Common myeloid progenitor, CD34-positive (primary cell): ENCODE measurements at regions of chr1 and their contacts with region 1.

Region 1: DNA sequence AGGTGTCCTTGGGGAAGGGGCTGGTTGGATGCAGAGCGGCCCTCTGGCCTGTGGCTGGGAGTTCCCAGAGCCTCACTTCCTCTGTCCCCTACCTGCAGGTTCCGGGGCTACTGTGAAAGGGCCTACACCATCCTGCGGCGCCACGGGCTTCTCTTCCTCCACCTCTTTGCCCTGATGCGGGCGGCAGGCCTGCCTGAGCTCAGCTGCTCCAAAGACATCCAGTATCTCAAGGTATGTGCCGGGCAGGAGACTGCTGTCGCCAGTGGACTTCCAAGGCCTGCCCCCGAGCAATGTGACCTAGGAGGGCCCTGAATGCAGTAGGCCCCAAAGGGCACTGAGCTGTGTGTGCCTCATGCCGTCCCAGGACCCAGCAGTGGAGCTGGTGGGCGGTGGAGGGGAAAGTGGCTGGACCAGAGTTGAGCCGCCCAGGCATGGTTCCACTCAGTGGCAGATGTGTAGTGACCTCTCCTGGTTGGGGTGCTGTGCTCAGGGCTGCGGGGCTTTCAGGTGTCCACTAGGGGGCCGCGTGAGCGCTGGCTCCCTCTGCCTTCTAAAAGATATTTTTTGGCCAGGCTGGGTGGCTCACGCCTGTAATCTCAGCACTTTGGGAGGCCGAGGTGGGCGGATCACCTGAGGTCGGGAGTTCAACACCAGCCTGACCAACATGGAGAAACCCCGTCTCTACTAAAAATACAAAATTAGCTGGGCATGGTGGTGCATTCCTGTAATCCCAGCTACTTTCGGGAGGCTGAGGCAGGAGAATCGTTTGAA is 73.4 kb downstream of the PIK3CD start:
- DNase-seq: peak; percentile 52 to 72 (median 68)
- H3K4me3 ChIP-seq: no peak overlapping the region
- H3K27ac ChIP-seq: no peak overlapping the region
- H3K4me1 ChIP-seq: no peaks in the 10 kb centered on the region
- H3K27me3 ChIP-seq: no peaks in the 10 kb centered on the region

Region 2: DNA sequence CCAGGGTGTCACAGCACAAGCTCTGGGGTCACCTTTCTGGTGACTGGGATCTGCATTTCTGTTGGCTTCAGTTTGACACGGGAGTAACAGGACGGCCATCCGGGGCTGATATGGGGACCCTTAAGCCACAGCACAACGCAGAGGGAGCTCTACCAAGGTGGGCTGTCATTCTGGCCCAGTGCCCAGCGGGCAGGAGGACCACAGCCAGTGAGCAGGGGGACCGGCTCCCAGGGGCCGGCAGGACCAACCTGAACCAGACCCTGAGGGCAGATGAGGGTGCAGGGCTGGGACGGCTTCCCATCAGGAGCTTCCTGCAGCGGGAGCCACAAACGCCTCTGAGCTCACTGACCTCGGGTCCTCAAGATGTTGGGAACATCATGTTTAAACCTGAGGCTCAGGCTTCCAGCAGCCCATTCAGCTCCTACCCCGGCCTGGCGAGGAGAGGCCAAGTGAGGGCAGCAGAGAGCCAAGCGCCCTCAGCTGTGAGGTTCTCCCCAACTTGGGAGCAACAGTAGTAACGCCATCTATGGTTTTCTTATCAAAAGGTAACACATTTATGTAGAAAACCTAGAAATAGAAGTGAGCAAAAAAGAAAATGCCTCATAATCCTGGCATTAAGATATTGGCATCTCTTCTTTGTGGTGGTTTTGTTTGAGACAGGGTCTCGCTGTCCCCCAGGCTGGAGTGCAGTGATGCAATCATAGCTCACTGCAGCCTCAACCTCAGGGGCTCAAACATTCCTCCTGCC is 109.4 kb before region 1 on chr1:
- CTCF ChIA-PET with region 1: interaction called, 10 read pairs
- POLR2A ChIA-PET with region 1: no interaction called
- DNase-seq: peak; percentile 70 to 85 (median 83)
- H3K4me3 ChIP-seq: no peak overlapping the region
- H3K27ac ChIP-seq: no peak overlapping the region
- H3K4me1 ChIP-seq: peaks cover 0 to 6% (median 3%) of the 10 kb centered on the region in 4 experiments
- H3K27me3 ChIP-seq: no peaks in the 10 kb centered on the region

Region 3: DNA sequence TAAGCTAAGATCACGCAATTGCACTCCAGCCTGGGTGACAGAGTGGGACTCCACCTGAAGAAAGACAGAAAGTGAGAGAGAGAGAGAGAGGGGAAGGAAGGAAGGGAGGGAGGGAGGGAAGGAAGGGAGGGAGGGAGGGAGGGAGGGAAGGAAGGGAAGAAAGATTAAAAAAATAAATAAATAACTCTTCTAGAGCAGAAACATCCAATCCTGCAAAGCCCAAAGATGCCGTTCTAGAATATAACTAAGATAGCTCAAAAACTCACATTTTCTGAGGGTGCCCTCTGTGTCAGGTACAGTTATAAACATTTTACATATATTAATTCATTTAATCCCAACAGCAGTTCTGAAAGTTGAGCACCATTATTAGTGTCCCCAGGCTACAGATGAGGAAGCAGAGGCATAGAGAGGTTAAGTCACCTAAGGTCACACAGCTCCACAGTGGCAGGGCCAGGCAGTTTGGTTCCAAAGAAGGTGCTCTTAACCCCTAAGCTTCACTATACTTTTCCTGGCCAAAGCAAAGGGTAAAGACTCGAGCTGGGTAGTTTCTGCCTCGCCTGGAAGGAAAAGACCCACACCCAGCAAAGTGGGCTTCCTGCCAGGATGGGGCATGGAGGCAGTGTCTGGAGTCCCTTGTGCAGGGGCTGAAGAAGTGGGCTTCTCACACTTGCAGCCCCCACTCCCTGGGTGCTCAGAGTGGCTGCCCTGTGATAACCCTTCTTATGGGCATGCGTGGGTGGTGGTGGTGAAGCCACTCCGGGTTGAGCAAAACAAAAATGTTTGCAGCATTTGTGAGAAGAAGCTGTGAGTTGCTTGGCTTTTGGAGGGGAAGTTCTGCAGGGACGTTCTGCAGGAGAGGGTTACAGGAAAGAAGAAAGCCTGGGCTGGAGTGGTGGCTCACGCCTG is 81.3 kb before region 1 on chr1:
- CTCF ChIA-PET with region 1: no interaction called
- POLR2A ChIA-PET with region 1: no interaction called
- DNase-seq: peak in 1 of 3 donors; percentile 31
- H3K4me3 ChIP-seq: peak overlapping the region in 3 of 7 experiments; percentile 13 to 33 (median 32)
- H3K27ac ChIP-seq: no peak overlapping the region
- H3K4me1 ChIP-seq: peaks cover 10 to 48% (median 23%) of the 10 kb centered on the region in 4 experiments
- H3K27me3 ChIP-seq: no peaks in the 10 kb centered on the region

Region 4: DNA sequence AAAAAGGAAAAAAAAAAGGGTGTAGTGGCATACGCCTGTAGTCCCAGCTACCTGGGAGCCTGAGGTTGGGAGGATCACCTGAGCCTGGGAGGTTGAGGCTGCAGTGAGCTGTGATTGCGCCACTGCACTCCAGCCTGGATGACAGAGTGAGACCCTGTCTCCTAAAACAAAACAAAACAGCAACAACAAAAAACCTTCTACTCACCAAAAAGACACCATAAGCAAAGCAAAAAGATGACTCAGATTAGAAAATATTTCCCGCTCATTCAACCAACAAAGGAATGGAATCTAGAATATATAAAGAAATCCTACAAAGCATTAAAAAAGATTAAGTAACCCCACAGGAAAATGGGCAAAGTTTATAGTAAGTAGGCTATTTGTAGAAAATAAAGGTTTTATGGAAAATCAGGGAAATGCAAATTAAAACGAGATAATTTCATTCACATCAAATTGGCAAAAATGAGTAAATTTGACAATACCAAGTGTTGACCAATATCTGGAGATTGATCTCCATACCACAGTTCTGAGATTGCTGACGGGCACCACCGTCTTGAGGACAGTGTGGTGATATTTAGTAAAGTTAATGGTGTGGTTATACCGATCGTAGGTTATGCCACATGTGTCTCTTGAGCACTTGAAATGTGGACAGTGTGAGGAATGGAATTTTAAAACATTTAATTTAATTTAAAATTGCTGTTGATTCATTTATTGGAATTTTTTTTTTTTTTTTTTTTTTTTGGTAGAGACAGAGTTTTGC is 19.4 kb before region 1 on chr1:
- CTCF ChIA-PET with region 1: interaction called, 21 read pairs
- POLR2A ChIA-PET with region 1: interaction called, 3 read pairs
- DNase-seq: no peak
- H3K4me3 ChIP-seq: no peak overlapping the region
- H3K27ac ChIP-seq: no peak overlapping the region
- H3K4me1 ChIP-seq: peaks cover 0 to 24% (median 10%) of the 10 kb centered on the region in 4 experiments
- H3K27me3 ChIP-seq: no peaks in the 10 kb centered on the region

Region 5: DNA sequence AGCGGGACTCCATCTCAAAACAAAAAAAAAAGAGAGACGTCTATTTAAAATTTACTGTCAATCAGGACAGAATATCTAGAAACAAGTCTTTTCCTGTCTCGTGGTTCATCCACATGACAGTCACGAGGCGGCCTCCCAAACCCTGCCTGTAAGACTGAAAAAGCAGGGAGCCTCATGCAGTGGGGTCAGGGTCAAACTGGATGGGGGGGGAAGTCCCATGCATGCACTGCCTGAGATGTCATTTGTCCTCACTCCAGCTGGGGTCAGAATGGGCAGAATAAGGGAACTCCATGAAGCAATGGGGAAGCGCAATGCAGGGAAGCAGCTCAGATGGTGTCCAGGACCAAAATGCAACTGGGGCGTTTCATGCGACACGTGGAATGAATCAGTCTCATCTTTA is 12.2 kb after region 1 on chr1:
- CTCF ChIA-PET with region 1: interaction called, 13 read pairs
- POLR2A ChIA-PET with region 1: no interaction called
- DNase-seq: no peak
- H3K4me3 ChIP-seq: no peak overlapping the region
- H3K27ac ChIP-seq: no peak overlapping the region
- H3K4me1 ChIP-seq: peaks cover 0 to 10% (median 1%) of the 10 kb centered on the region in 4 experiments
- H3K27me3 ChIP-seq: no peaks in the 10 kb centered on the region